HCT116 (cell line): ENCODE measurements at regions of chr14 and their contacts with region 1.

Region 1: GRCh38 chr14:20855652-20856291 is 35.4 kb upstream of the RNASE3 start:
- DNase-seq: peak; percentile 73
- ATAC-seq: peak; percentile 96
- H3K4me3 ChIP-seq: no peak overlapping the region
- H3K27ac ChIP-seq: no peak overlapping the region
- H3K4me1 ChIP-seq: peaks cover 3 to 5% of the 10 kb centered on the region in 2 experiments; a peak in 2 of 4 replicates
- H3K27me3 ChIP-seq: peaks cover 16% of the 10 kb centered on the region; the same call in 1 of the 2 replicates
- CTCF ChIP-seq: peak; percentile 69 to 90 (median 79)
- POLR2A ChIP-seq: no peak
- RAD21 ChIP-seq: peak; percentile 86

Region 2: GRCh38 chr14:20690848-20691523 is 164.8 kb before region 1 on chr14:
- CTCF ChIA-PET with region 1: interaction called, 18 read pairs
- POLR2A ChIA-PET with region 1: no interaction called
- RAD21 ChIA-PET with region 1: no interaction called
- intact Hi-C with region 1: no loop called
- DNase-seq: peak; percentile 60
- ATAC-seq: peak; percentile 93
- H3K4me3 ChIP-seq: no peak overlapping the region
- H3K27ac ChIP-seq: no peak overlapping the region
- H3K4me1 ChIP-seq: peaks cover 0 to 8% of the 10 kb centered on the region in 2 experiments; a peak in 2 of 4 replicates
- H3K27me3 ChIP-seq: no peaks in the 10 kb centered on the region
- CTCF ChIP-seq: peak; percentile 84 to 89 (median 86)
- POLR2A ChIP-seq: no peak
- RAD21 ChIP-seq: peak; percentile 84

Region 3: GRCh38 chr14:20836668-20837338 is 19.0 kb before region 1 on chr14:
- CTCF ChIA-PET with region 1: interaction called, 12 read pairs
- POLR2A ChIA-PET with region 1: interaction called, 4 read pairs
- RAD21 ChIA-PET with region 1: interaction called in 1 of 2 experiments, 4 read pairs
- intact Hi-C with region 1: loop called (anchors 1 kb)
- DNase-seq: peak; percentile 66
- ATAC-seq: peak; percentile 88
- H3K4me3 ChIP-seq: no peak overlapping the region
- H3K27ac ChIP-seq: no peak overlapping the region
- H3K4me1 ChIP-seq: peaks cover 0 to 10% of the 10 kb centered on the region in 2 experiments; a peak in 2 of 4 replicates
- H3K27me3 ChIP-seq: no peaks in the 10 kb centered on the region
- CTCF ChIP-seq: peak; percentile 49 to 77 (median 72); a peak in 5 of 6 replicates
- POLR2A ChIP-seq: no peak
- RAD21 ChIP-seq: peak; percentile 65

Region 4: DNA sequence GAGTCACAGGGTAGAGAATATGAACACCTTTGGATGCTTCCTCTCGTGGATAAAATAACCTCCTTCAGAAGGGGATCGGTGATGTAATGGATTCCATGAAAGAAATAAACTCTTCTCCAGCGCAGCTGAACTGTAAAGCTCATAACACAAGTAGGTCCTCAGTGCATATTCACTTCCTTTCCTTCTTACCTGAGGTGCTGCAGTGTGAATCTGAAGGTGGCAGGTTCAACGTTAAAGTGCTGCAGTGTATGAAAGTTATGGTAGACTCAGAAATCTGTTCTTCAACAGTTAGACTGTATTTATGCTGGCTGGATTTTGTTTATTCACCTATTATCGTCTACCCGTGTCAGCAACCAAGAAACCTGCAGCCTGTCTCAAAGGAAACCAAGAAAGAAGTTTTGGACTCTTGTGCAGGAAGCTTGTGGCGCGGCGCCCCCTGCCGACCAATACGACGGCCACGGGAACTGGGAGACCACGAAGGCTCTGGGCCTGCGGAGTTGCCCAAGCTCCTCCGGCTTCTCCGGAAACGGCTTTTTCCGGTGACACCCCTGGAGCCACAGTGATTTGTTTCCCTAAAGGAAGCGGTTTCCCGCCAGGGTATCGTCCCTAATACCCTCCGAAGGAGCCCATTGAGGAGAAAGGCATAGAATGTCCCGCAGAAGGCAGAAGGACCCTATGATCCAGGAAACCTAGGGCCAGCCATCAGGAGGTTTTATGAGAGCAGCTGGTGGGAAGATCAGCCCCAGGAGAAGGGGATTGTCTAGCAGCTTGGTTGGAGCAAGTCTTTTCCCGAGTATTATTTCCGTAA is 17.8 kb after region 1 on chr14:
- CTCF ChIA-PET with region 1: interaction called, 32 read pairs
- POLR2A ChIA-PET with region 1: interaction called, 10 read pairs
- RAD21 ChIA-PET with region 1: interaction called in 1 of 2 experiments, 3 read pairs
- intact Hi-C with region 1: no loop called
- DNase-seq: peak; percentile 79
- ATAC-seq: peak; percentile 99
- H3K4me3 ChIP-seq: peak overlapping the region; percentile 42 to 47
- H3K27ac ChIP-seq: peak overlapping the region; percentile 18
- H3K4me1 ChIP-seq: peaks cover 0 to 14% of the 10 kb centered on the region in 2 experiments; a peak in 2 of 4 replicates
- H3K27me3 ChIP-seq: no peaks in the 10 kb centered on the region
- CTCF ChIP-seq: peak; percentile 65 to 94 (median 93)
- POLR2A ChIP-seq: peak; percentile 13
- RAD21 ChIP-seq: peak; percentile 74

Region 5: DNA sequence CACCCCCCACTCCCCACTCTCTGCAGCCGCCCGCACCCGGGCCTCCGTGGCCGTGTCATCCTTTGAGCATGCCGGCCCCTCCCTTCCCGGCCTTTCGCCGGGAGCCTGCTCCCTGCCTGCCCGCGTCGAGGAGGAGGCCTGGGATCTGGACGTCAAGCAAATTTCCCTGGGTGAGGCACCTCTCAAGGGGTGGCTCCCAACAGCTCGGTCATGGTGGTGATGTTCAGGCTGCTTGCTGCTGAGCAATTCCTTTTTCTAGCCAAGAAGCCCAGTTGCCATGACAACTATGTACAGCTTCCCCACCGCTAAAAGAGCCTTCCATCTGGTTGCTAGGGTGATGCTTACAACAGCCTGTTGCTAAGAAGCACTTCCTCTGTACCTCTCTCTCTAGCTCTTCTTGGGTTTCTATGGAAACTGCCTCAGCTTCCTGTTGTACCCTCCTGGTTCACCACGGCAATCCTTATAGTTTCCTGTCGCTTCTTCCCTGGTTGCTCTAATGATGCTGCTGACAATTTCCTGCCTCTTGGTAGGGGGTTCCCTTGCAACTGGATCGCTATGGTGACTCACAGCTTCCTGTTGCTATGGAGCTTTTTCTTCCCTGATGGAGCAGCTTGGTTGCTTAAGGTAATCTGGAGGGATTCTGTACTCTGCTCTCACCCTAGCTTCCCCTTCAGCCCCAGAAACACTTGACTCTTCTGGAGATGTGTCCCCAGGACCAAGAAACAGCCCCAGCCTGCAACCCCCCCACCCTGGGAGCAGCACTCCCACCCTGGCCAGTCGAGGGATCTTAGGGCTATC is 231.7 kb after region 1 on chr14:
- CTCF ChIA-PET with region 1: no interaction called
- POLR2A ChIA-PET with region 1: no interaction called
- RAD21 ChIA-PET with region 1: no interaction called
- intact Hi-C with region 1: no loop called
- DNase-seq: no peak
- ATAC-seq: no peak
- H3K4me3 ChIP-seq: no peak overlapping the region
- H3K27ac ChIP-seq: no peak overlapping the region
- H3K4me1 ChIP-seq: peaks cover 3 to 30% of the 10 kb centered on the region in 2 experiments
- H3K27me3 ChIP-seq: no peaks in the 10 kb centered on the region
- CTCF ChIP-seq: no peak
- POLR2A ChIP-seq: no peak
- RAD21 ChIP-seq: no peak

Region 6: GRCh38 chr14:21103710-21104447 is 248.1 kb after region 1 on chr14:
- CTCF ChIA-PET with region 1: interaction called, 3 read pairs
- POLR2A ChIA-PET with region 1: no interaction called
- RAD21 ChIA-PET with region 1: no interaction called
- intact Hi-C with region 1: loop called (anchors 10 kb)
- DNase-seq: peak; percentile 90
- ATAC-seq: peak; percentile 83
- H3K4me3 ChIP-seq: peak overlapping the region; percentile 69 to 74
- H3K27ac ChIP-seq: peak overlapping the region; percentile 95
- H3K4me1 ChIP-seq: peaks cover 56 to 80% of the 10 kb centered on the region in 2 experiments
- H3K27me3 ChIP-seq: no peaks in the 10 kb centered on the region
- CTCF ChIP-seq: peak in 2 of 3 experiments; percentile 68 to 76; a peak in 3 of 6 replicates
- POLR2A ChIP-seq: peak; percentile 64
- RAD21 ChIP-seq: no peak

Region 7: GRCh38 chr14:21575661-21576060 is 719.9 kb after region 1 on chr14:
- CTCF ChIA-PET with region 1: no interaction called
- POLR2A ChIA-PET with region 1: no interaction called
- RAD21 ChIA-PET with region 1: no interaction called
- intact Hi-C with region 1: no loop called
- DNase-seq: no peak
- ATAC-seq: no peak
- H3K4me3 ChIP-seq: no peak overlapping the region
- H3K27ac ChIP-seq: no peak overlapping the region
- H3K4me1 ChIP-seq: no peaks in the 10 kb centered on the region
- H3K27me3 ChIP-seq: no peaks in the 10 kb centered on the region; the same call in 1 of the 2 replicates
- CTCF ChIP-seq: no peak
- POLR2A ChIP-seq: no peak
- RAD21 ChIP-seq: no peak